ENCODE measurements at regions of chr16 and their contacts with region 1.

Region 1: DNA sequence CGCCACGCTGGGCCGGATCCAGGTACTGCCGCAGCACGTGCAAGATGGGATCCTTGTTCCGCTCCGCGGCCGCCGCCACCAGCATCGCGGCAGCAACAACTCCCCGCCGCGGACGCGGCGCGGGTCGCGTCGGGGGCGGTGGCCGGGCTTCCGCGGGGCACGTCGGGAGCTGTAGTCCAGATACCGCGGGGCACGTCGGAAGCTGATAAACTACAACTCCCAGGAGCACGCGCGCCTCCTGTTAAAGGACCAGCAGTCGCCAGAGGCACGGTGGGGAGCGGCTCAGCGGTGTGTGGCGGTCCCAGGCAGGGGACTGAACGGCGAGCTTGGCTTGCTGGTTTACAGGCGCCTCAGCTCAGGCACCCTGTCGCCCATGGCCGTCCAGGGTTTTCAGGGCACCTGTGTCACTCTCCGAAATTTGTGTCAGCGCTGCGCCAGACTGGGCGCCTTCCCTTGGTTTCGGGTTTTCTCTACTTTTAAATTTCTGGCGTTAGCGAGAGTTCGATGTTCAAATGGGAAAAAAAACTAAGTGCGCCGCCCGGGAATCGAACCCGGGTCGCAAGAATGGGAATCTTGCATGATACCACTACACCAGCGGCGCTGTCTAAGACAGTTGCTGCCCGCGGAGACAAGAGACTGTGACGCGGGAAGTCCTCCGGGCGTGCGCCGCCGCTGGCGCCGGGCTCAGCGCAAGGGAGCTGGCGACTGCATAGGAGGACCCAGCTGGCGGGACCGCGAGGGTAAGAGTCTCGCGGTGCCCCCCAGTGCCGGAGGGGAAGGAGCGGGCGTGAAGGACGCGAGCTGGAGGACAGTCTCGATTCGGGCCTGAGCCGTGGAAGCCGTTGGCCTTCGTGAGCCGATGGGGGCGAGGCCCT is at the start of gene METTL26:
- DNase-seq: peak; percentile 89
- ATAC-seq: peak; percentile 90
- H3K4me3 ChIP-seq: peak within 1 kb of the TSS; percentile 59 to 76
- H3K27ac ChIP-seq: peak within 1 kb of the TSS; percentile 86
- H3K4me1 ChIP-seq: peaks cover 25% of the 10 kb centered on the region
- H3K27me3 ChIP-seq: no peaks in the 10 kb centered on the region
- CTCF ChIP-seq: no peak
- total RNA-seq, gene METTL26: 91.8 TPM

Region 2: DNA sequence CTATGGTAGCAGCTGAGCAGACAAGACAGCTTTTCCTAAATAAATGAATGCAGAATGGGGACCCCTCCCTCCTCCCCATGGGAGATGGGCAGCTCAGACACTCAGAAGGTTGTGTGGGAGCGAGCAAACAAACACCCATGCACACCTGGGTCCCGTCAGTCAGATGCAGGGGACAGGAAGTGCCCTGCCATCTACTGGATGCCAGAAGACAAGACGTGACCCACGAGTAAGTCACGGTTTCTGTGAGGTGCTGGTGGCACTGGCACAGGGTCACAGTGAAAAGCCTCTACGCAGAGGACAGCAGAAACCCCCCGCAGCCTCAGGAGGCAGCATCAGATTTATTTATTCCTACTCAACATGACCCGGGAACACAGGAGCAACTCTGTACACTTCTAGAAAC is 447.8 kb before region 1 on chr16:
- CTCF ChIA-PET with region 1: no interaction called
- POLR2A ChIA-PET with region 1: no interaction called
- in situ Hi-C with region 1: no loop called
- intact Hi-C with region 1: no loop called
- DNase-seq: no peak
- ATAC-seq: peak; percentile 67; the same call in 1 of the 2 replicates
- H3K4me3 ChIP-seq: no peak overlapping the region
- H3K27ac ChIP-seq: no peak overlapping the region
- H3K4me1 ChIP-seq: no peaks in the 10 kb centered on the region
- H3K27me3 ChIP-seq: no peaks in the 10 kb centered on the region
- CTCF ChIP-seq: no peak

Region 3: GRCh38 chr16:212999-213398 is 423.4 kb before region 1 on chr16:
- CTCF ChIA-PET with region 1: no interaction called
- POLR2A ChIA-PET with region 1: interaction called, 10 read pairs
- in situ Hi-C with region 1: no loop called
- intact Hi-C with region 1: no loop called
- DNase-seq: no peak
- ATAC-seq: no peak
- H3K4me3 ChIP-seq: no peak overlapping the region
- H3K27ac ChIP-seq: no peak overlapping the region
- H3K4me1 ChIP-seq: no peaks in the 10 kb centered on the region
- H3K27me3 ChIP-seq: no peaks in the 10 kb centered on the region
- CTCF ChIP-seq: no peak

Region 4: GRCh38 chr16:410516-411178 is 225.8 kb before region 1 on chr16:
- CTCF ChIA-PET with region 1: no interaction called
- POLR2A ChIA-PET with region 1: no interaction called
- in situ Hi-C with region 1: no loop called
- intact Hi-C with region 1: no loop called
- DNase-seq: no peak
- ATAC-seq: no peak
- H3K4me3 ChIP-seq: no peak overlapping the region
- H3K27ac ChIP-seq: no peak overlapping the region
- H3K4me1 ChIP-seq: no peaks in the 10 kb centered on the region
- H3K27me3 ChIP-seq: no peaks in the 10 kb centered on the region
- CTCF ChIP-seq: no peak

Region 5: GRCh38 chr16:527006-527753 is 109.3 kb before region 1 on chr16 and contains the start of gene CAPN15:
- CTCF ChIA-PET with region 1: no interaction called
- POLR2A ChIA-PET with region 1: no interaction called
- in situ Hi-C with region 1: no loop called
- intact Hi-C with region 1: no loop called
- DNase-seq: no peak
- ATAC-seq: peak; percentile 83
- H3K4me3 ChIP-seq: peak within 1 kb of the TSS; percentile 82 to 86
- H3K27ac ChIP-seq: peak within 1 kb of the TSS; percentile 95
- H3K4me1 ChIP-seq: peaks cover 42% of the 10 kb centered on the region
- H3K27me3 ChIP-seq: no peaks in the 10 kb centered on the region
- CTCF ChIP-seq: no peak
- total RNA-seq, gene CAPN15: 78.5 TPM

Region 6: DNA sequence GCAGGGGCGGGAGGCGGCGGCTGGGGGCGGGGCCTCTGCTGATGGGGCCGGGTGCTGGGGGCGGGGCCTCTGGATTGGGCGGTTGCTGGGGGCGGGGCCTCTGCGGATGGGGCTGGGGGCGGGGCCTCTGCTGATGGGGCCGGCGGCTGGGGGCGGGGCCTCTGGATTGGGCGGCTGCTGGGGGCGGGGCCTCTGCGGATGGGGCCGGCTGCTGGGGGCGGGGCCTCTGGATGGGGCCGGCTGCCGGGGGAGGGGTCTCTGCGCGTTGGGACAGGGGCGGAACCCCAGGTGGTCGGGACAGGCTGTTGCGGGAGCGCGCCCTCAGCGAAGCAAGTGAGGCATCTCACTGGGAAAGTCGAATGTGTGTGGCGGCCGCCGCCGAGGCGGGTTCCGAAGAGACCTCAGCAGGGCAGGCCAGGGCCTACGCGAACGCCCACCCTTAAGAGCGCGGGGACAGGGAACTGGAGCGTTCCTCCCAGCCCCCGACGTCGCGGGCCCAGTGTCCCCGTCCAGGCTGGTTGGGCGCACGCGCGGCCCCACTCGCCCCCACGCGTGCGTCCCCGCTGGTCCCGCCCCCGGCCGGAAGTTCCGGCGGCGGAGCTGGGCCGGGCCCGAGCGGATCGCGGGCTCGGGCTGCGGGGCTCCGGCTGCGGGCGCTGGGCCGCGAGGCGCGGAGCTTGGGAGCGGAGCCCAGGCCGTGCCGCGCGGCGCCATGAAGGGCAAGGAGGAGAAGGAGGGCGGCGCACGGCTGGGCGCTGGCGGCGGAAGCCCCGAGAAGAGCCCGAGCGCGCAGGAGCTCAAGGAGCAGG is 43.6 kb after region 1 on chr16 and contains the start of gene STUB1:
- CTCF ChIA-PET with region 1: no interaction called
- POLR2A ChIA-PET with region 1: no interaction called
- in situ Hi-C with region 1: no loop called
- intact Hi-C with region 1: no loop called
- DNase-seq: no peak
- ATAC-seq: peak; percentile 43
- H3K4me3 ChIP-seq: peak within 1 kb of the TSS; percentile 66 to 71
- H3K27ac ChIP-seq: peak within 1 kb of the TSS; percentile 87
- H3K4me1 ChIP-seq: peaks cover 21% of the 10 kb centered on the region
- H3K27me3 ChIP-seq: no peaks in the 10 kb centered on the region
- CTCF ChIP-seq: no peak
- total RNA-seq, gene STUB1: 217 TPM

Measured in Panc1 (cell line).